ENCODE measurements at regions of chr22 and their contacts with region 1.

Region 1: GRCh38 chr22:29603358-29604075 is at the start of gene NF2:
- DNase-seq: peak; percentile 99
- H3K4me3 Mint-ChIP-seq: peak within 1 kb of the TSS; percentile 85
- H3K27ac Mint-ChIP-seq: peak within 1 kb of the TSS; percentile 95
- H3K4me1 Mint-ChIP-seq: peaks cover 18% of the 10 kb centered on the region
- H3K27me3 Mint-ChIP-seq: no peaks in the 10 kb centered on the region
- total RNA-seq, gene NF2: 40.4 to 44.2 TPM

Region 2: GRCh38 chr22:29480512-29481264 is 122.8 kb before region 1 on chr22:
- CTCF ChIA-PET with region 1: no interaction called
- POLR2A ChIA-PET with region 1: no interaction called
- intact Hi-C with region 1: no loop called
- DNase-seq: peak; percentile 67
- H3K4me3 Mint-ChIP-seq: peak overlapping the region; percentile 56
- H3K27ac Mint-ChIP-seq: no peak overlapping the region
- H3K4me1 Mint-ChIP-seq: peaks cover 13% of the 10 kb centered on the region
- H3K27me3 Mint-ChIP-seq: peaks cover 38% of the 10 kb centered on the region

Region 3: GRCh38 chr22:29587938-29588699 is 15.4 kb before region 1 on chr22:
- CTCF ChIA-PET with region 1: interaction called, 13 read pairs
- POLR2A ChIA-PET with region 1: no interaction called
- intact Hi-C with region 1: no loop called
- DNase-seq: no peak
- H3K4me3 Mint-ChIP-seq: no peak overlapping the region
- H3K27ac Mint-ChIP-seq: no peak overlapping the region
- H3K4me1 Mint-ChIP-seq: peaks cover 9% of the 10 kb centered on the region
- H3K27me3 Mint-ChIP-seq: no peaks in the 10 kb centered on the region

Region 4: GRCh38 chr22:29625090-29625825 is 21.7 kb after region 1 on chr22:
- CTCF ChIA-PET with region 1: interaction called, 42 read pairs
- POLR2A ChIA-PET with region 1: interaction called, 4 read pairs
- intact Hi-C with region 1: no loop called
- DNase-seq: peak; percentile 57
- H3K4me3 Mint-ChIP-seq: no peak overlapping the region
- H3K27ac Mint-ChIP-seq: no peak overlapping the region
- H3K4me1 Mint-ChIP-seq: peaks cover 57% of the 10 kb centered on the region
- H3K27me3 Mint-ChIP-seq: no peaks in the 10 kb centered on the region

Region 5: DNA sequence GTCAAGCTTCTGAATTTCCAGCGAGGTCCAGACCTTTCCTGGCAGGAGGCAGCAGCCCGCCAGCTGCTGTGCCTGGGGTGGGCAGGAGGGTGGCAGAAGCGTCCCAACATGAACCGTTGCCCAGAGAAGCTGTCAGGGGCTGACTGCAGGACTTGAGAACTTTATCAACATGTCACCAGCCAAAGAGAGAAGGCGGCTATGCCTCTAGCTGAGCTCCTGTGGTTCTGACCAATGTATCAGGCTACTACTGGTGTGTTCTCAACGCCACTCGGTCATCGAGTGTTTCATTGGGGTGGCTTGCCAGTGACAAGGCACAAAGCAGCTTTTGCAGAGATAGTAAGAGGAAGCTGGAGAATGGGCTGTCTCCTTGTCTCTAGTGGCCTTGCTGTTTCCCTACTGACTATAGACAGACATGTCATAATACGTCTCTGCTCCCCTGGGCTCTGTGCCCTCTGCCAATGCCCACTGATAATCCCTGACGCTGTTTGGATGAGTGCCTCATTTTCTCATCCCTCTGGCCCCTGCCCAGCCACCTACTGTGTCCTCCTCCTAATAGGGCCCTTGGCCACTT is 252.2 kb after region 1 on chr22:
- CTCF ChIA-PET with region 1: no interaction called
- POLR2A ChIA-PET with region 1: no interaction called
- intact Hi-C with region 1: no loop called
- DNase-seq: no peak
- H3K4me3 Mint-ChIP-seq: no peak overlapping the region
- H3K27ac Mint-ChIP-seq: no peak overlapping the region
- H3K4me1 Mint-ChIP-seq: no peaks in the 10 kb centered on the region
- H3K27me3 Mint-ChIP-seq: peaks cover 3% of the 10 kb centered on the region

Region 6: GRCh38 chr22:29883045-29883774 is 279.7 kb after region 1 on chr22 and contains the start of gene MTMR3:
- CTCF ChIA-PET with region 1: no interaction called
- POLR2A ChIA-PET with region 1: no interaction called
- intact Hi-C with region 1: loop called (anchors 1 kb)
- DNase-seq: peak; percentile 96
- H3K4me3 Mint-ChIP-seq: peak within 1 kb of the TSS; percentile 86
- H3K27ac Mint-ChIP-seq: peak within 1 kb of the TSS; percentile 73
- H3K4me1 Mint-ChIP-seq: peaks cover 12% of the 10 kb centered on the region
- H3K27me3 Mint-ChIP-seq: no peaks in the 10 kb centered on the region
- total RNA-seq, gene MTMR3: 22.7 to 25.3 TPM